Activated T-helper 2 cell treated with anti-CD3 and anti-CD28 coated beads, Interferon-gamma antibody, Interleukin-2, Interleukin-4, amounts not matched to agents 10 μg/mL and 5 μg/mL and 100 μg/mL, durations not matched to agents 14 hours and 24 hours and 36 hours (primary cell): ENCODE measurements at regions of chr5 and their contacts with region 1.

Region 1: DNA sequence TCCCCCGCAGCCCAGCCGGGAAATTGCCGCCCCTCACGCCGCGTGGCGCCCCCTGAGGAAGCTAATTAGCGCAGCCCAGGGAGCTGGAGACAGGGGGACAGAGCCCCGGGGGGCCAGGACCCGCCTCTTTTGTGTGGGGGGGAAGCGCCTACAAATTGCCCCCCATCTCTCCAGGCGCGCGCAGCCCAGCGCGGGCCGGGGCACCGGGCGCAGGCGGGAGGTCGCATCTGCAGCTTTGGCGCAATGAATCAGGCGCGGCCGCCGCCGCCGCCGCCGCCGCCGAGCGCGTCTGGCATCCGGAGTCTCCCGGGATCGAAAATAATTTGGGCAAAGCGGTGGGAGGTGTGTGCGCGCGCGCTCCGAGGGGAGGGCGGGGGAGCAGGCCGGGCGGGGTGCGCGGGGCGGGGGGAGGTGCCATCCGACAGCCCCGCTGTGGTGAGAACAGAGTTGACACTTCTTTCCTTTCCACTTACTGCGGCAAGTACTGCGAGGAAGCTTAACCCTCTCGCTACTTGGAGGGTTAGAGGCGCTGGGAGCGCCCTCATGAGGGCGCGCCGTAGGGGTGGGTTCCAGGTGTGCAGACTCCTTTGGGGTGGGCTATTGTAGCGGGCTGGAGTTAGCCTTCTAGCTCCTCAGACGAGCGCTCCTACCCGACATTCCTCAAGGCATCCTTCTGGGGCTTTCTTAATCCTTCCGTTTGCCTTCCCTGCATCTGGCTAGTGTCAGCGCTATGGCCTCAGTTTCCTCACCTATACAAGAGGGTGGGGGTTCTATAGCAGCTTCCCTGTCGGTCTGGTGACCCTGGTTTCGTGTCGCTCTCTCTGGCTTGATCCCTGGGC is 63.1 kb downstream of the CXXC5 start:
- DNase-seq: peak; percentile 18
- H3K4me3 Mint-ChIP-seq: peak overlapping the region; percentile 47
- H3K27ac Mint-ChIP-seq: no peak overlapping the region
- H3K4me1 Mint-ChIP-seq: peaks cover 2% of the 10 kb centered on the region
- H3K27me3 Mint-ChIP-seq: peaks cover 43% of the 10 kb centered on the region

Region 2: DNA sequence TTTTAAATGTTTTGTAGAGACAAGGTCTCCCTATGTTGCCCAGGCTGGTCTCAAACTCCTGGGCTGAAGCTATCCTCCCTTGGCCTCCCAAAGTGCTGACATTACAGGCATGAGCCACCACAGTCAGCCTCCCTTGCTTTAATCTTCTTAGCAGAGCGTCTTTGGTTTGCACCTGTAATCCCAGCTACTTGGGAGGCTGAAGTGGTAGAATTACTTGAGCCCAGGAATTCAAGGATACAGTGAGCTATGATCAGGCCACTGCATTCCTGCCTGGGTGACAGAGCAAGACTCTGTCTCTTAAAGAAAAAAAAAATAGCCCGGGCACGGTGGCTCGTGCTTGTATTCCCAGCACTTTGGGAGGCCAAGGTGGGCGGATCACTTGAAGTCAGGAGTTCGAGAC is 122.3 kb before region 1 on chr5:
- intact Hi-C with region 1: no loop called
- DNase-seq: no peak
- H3K4me3 Mint-ChIP-seq: no peak overlapping the region
- H3K27ac Mint-ChIP-seq: peak overlapping the region; percentile 12
- H3K4me1 Mint-ChIP-seq: peaks cover 18% of the 10 kb centered on the region
- H3K27me3 Mint-ChIP-seq: no peaks in the 10 kb centered on the region

Region 3: GRCh38 chr5:139651853-139652787 is 59.2 kb before region 1 on chr5:
- intact Hi-C with region 1: loop called (anchors 5 kb)
- DNase-seq: peak; percentile 44
- H3K4me3 Mint-ChIP-seq: no peak overlapping the region
- H3K27ac Mint-ChIP-seq: no peak overlapping the region
- H3K4me1 Mint-ChIP-seq: peaks cover 25% of the 10 kb centered on the region
- H3K27me3 Mint-ChIP-seq: peaks cover 40% of the 10 kb centered on the region

Region 4: DNA sequence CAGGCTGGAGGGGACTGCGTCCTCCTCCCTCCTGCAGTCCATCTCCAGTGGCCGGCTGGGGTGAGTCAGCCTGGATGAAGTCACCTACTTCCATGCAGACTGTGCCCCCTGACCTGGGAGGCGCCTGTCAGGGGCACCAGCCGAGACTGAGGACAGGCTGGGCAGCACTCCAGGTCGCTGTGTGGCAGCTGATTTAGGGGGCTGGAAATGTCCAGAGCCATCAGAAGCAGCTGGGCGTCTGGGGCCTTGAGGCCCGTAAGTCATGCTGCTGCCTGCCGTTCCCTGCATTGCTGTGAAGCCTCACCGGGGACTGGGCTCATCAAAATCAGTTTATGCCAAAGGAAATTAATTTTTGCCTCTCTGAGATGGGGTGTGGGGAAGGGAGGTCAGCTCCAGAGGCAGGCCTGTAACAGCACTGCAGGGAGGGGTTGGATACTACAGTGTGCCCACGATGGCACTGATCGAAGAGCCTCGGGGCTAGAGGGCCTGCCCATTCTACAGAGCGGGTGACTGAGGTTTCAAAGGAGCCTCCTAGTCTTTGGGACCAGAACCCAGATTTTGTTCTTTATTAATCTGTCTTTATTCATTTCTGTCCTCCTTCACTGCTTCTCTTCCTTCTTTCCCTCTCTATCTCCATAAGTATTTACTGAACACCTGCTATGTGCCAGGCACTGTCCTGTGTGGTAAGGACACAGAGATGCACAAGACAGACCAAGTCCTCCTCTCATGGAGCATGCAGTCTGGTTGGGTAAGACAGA is 14.0 kb after region 1 on chr5:
- intact Hi-C with region 1: no loop called
- DNase-seq: no peak
- H3K4me3 Mint-ChIP-seq: no peak overlapping the region
- H3K27ac Mint-ChIP-seq: no peak overlapping the region
- H3K4me1 Mint-ChIP-seq: no peaks in the 10 kb centered on the region
- H3K27me3 Mint-ChIP-seq: no peaks in the 10 kb centered on the region

Region 5: DNA sequence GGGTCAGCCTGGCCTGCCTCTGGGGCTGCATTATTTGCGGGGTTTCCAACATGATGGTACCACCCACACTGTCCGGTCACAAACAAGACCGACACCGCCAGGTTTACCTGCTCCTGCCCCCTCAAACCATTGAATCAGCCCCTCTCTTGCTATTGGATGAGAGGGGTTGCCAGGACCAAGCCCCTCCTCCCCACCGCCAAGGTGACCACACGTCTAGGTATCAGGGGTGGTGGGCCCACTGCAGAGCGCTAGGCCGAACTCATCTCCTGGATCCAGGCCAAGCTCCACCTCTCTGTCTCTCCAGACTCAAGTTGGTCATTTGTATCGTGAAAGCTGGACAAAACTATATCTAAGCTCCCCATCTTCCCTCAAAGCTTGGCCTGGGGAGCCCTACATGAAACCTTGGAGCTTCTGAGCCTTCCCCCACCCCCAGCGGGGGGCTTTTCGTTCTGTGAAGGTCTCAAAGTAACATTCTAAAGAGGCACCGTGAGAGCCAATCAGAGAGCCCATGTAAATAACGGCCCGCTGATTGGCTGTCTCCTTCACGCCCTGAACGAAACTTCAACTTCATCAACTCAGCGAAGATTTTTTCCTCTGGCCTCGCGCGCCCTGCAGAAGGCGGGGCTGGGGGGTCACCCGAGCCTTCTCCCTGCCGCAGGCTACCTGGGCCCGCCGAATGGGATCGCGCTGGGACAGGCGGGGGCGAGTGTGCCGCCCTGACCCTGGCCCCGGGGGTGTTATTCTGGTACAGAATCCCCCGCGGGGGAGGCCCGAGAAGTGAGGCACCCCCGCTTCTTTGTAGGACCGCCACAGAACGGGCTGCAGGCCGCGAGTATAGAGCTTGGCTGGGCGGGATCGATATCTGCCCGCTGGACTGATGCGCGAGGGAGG is 34.8 kb after region 1 on chr5:
- intact Hi-C with region 1: loop called (anchors 2 kb)
- DNase-seq: no peak
- H3K4me3 Mint-ChIP-seq: peak overlapping the region; percentile 77
- H3K27ac Mint-ChIP-seq: no peak overlapping the region
- H3K4me1 Mint-ChIP-seq: peaks cover 16% of the 10 kb centered on the region
- H3K27me3 Mint-ChIP-seq: peaks cover 30% of the 10 kb centered on the region

Region 6: GRCh38 chr5:140157032-140157803 is 445.9 kb after region 1 on chr5:
- intact Hi-C with region 1: no loop called
- DNase-seq: peak; percentile 77
- H3K4me3 Mint-ChIP-seq: peak overlapping the region; percentile 33
- H3K27ac Mint-ChIP-seq: no peak overlapping the region
- H3K4me1 Mint-ChIP-seq: no peaks in the 10 kb centered on the region
- H3K27me3 Mint-ChIP-seq: peaks cover 4% of the 10 kb centered on the region